Posterior vena cava (tissue), 2 donors: ENCODE measurements at regions of chr12 and their contacts with region 1.

Region 1: DNA sequence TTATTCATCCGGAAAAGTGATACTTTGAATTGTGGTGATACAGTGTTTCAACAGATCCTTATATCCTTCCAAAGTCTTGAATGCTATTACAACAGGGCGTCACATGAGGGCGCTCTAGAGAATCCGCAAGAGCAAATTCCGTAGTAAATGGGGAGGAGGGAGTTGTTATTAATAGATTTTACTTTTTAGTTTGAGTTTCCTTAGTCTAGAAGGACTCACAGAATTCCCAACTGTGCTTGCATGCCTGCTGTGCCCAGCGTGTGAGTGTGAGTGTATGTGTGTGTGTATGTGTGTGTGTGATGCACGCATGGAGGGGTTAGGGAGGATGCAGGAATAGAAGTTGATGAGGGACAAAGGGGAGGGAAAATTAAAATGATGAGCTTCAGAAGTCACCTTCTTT is 375.3 kb downstream of the C12orf75 start:
- DNase-seq: no peak

Region 2: DNA sequence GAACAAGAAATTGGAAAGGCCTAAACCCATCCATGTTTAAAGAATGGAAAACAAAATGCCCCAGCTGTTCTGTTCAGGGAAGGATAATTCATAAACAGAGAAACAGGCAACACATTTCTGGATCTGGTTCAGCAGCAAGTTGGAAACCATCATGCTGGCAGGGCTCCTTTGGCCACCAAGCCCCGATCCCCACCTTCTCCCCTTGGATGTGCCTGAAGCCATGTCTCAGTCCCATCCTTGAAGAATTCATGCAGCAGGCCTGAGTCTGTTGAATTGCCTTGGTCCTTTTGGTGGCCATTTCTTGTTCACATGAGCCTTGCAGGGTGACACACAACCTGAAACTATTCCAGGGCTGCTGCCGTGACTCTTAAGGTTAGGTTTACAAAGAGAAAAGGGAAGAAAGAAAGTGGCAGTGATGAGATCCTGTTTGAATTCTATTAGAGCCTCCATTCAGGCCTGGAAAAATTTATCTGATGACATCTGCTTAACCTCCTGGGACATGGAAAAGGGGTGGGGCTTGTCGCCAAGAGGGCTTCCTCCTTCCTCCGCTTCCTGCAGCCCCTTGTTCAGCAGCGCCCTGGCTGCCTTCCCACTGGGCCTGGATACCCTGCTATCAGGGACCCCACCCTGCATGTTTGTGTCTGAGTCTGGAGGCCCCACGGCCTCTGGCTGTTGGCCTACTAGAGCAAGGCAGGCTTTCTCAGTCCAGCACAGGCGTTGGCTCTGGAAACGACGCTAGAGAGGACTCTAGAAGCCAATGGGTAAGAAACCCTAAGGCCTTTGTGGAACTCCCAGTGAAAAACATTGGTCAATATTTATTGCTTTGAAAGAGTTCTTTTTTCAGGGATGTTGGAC is 33.4 kb before region 1 on chr12:
- intact Hi-C with region 1: loop called in 1 of 2 experiments (anchors 2 kb)
- DNase-seq: peak; percentile 90